ENCODE measurements at regions of chrX and their contacts with region 1.

Region 1: DNA sequence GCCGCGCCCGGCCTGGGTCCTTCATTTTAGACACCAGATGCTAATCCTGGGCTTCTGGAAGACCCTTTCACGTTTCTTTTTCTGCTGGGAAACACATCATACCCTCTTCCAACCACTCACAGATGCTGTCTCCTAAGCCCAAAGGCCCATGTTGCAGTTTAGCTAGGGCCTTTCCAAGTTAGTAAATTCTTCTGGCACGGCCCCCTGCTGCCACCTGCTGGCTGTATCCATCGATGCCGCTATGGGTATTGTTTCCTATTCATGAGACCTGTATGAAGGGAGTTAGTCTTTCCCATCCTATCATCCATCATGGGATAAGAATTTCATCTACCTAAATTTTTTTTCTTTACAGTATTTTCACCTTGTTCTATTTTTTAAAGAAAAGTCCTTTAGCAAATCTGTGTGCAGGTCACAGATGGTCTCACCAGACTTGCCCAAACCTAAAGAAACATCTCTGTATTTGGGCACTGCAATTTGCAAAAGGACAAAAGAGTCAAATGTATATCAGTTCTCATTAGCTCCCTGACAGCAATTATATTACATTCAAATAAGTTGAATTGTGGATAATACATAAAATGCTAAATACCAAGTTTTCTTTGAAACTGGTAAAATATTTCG is 37.8 kb upstream of the SLC9A7 start:
- DNase-seq: peak; percentile 68 to 89 (median 84)
- ATAC-seq: peak in 1 of 2 donors; percentile 74
- H3K4me3 ChIP-seq: no peak overlapping the region
- H3K27ac ChIP-seq: no peak overlapping the region
- H3K4me1 ChIP-seq: no peaks in the 10 kb centered on the region
- H3K27me3 ChIP-seq: no peaks in the 10 kb centered on the region

Region 2: DNA sequence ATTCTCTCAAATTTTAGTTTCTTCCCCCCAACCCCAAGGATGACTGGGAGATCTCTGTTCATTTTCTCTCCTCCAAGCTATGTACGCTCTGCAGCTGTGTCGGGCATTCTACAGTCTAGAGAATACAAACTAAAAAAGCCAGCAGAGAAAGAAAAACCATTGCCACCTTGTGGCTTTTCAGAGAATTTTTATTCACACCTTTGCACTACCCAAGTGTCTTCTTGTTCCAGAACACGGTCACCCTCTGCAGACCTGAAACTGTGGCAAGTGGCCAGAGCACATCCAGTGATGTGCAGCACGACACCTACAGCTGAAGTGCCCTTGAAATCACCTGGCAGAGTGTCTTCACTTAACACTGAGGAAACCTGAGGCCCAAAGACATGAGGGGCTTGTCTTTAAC is 154.5 kb before region 1 on chrX:
- intact Hi-C with region 1: no loop called
- DNase-seq: peak in 2 of 3 donors; percentile 58
- ATAC-seq: peak; percentile 85 to 91
- H3K4me3 ChIP-seq: no peak overlapping the region
- H3K27ac ChIP-seq: no peak overlapping the region
- H3K4me1 ChIP-seq: no peaks in the 10 kb centered on the region
- H3K27me3 ChIP-seq: no peaks in the 10 kb centered on the region

Region 3: DNA sequence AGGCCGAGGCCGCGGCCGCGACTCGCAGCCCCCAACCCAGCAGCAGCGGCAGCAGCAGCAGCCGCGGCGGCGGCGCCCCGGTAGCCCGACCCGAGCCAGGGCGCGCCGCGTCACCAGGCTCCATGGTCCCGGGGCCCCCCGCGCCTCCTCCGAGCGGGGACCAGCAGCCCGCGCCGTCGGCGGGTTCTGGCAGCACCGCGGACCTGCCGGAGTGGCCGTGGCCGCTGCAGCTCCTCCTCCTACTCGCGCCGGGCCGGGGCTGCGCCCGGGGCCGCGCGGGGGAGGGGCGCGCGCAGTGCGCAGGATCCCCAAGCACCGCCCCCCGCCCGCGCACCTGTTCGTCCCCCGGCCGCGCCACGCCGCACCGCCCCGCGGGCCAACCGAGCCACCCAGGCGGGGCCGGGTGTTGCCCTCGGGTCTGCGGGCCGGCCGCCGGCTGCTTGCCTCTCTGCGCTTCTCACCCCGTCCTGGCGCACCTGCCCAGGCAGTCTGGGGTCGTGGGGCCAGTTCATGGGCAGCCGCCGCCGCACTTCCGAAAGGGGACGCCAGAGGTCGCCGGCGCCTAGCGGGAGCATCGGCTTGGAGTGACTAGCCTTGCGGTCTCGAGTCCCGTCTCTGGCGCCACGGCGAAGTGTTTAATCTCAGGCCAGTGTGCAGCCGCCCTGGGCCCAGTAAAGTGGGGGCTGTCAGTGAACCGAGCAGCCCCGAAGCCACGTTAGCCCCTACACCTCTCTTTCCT is 37.6 kb before region 1 on chrX and contains the start of gene SLC9A7:
- intact Hi-C with region 1: loop called in 1 of 4 experiments (anchors 5 kb)
- DNase-seq: peak; percentile 68 to 92 (median 90)
- ATAC-seq: peak; percentile 86 to 92
- H3K4me3 ChIP-seq: peak within 1 kb of the TSS; percentile 68
- H3K27ac ChIP-seq: no peak within 1 kb of the TSS
- H3K4me1 ChIP-seq: no peaks in the 10 kb centered on the region
- H3K27me3 ChIP-seq: no peaks in the 10 kb centered on the region
- total RNA-seq, gene SLC9A7: 4.4 to 8.7 (median 6.1) TPM

Region 4: GRCh38 chrX:47283015-47283771 is 486.5 kb after region 1 on chrX:
- intact Hi-C with region 1: no loop called
- DNase-seq: no peak
- ATAC-seq: no peak
- H3K4me3 ChIP-seq: no peak overlapping the region
- H3K27ac ChIP-seq: no peak overlapping the region
- H3K4me1 ChIP-seq: no peaks in the 10 kb centered on the region
- H3K27me3 ChIP-seq: no peaks in the 10 kb centered on the region

Measured in right cardiac atrium (tissue), 5 donors.